Activated CD4-positive, alpha-beta T cell treated with anti-CD3 and anti-CD28 coated beads for 36 hours (primary cell): ENCODE measurements at regions of chr6 and their contacts with region 1.

Region 1: GRCh38 chr6:26322645-26323482 is 42.1 kb upstream of the BTN3A2 start:
- DNase-seq: peak; percentile 77
- ATAC-seq: peak; percentile 66
- H3K4me3 Mint-ChIP-seq: peak overlapping the region; percentile 84
- H3K27ac Mint-ChIP-seq: peak overlapping the region; percentile 93
- H3K4me1 Mint-ChIP-seq: peaks cover 28% of the 10 kb centered on the region
- H3K27me3 Mint-ChIP-seq: peaks cover 5% of the 10 kb centered on the region

Region 2: GRCh38 chr6:26249957-26250697 is 72.7 kb before region 1 on chr6:
- CTCF ChIA-PET with region 1: interaction called, 11 read pairs
- POLR2A ChIA-PET with region 1: interaction called, 12 read pairs
- intact Hi-C with region 1: no loop called
- DNase-seq: peak; percentile 85
- ATAC-seq: peak; percentile 63
- H3K4me3 Mint-ChIP-seq: peak overlapping the region; percentile 86
- H3K27ac Mint-ChIP-seq: peak overlapping the region; percentile 97
- H3K4me1 Mint-ChIP-seq: peaks cover 14% of the 10 kb centered on the region
- H3K27me3 Mint-ChIP-seq: no peaks in the 10 kb centered on the region

Region 3: GRCh38 chr6:26351544-26351953 is 28.7 kb after region 1 on chr6:
- CTCF ChIA-PET with region 1: no interaction called
- POLR2A ChIA-PET with region 1: no interaction called
- intact Hi-C with region 1: no loop called
- DNase-seq: no peak
- ATAC-seq: no peak
- H3K4me3 Mint-ChIP-seq: no peak overlapping the region
- H3K27ac Mint-ChIP-seq: no peak overlapping the region
- H3K4me1 Mint-ChIP-seq: no peaks in the 10 kb centered on the region
- H3K27me3 Mint-ChIP-seq: no peaks in the 10 kb centered on the region

Region 4: GRCh38 chr6:26493258-26493657 is 170.4 kb after region 1 on chr6:
- CTCF ChIA-PET with region 1: no interaction called
- POLR2A ChIA-PET with region 1: no interaction called
- intact Hi-C with region 1: no loop called
- DNase-seq: no peak
- ATAC-seq: peak; percentile 71
- H3K4me3 Mint-ChIP-seq: no peak overlapping the region
- H3K27ac Mint-ChIP-seq: no peak overlapping the region
- H3K4me1 Mint-ChIP-seq: peaks cover 10% of the 10 kb centered on the region
- H3K27me3 Mint-ChIP-seq: no peaks in the 10 kb centered on the region

Region 5: DNA sequence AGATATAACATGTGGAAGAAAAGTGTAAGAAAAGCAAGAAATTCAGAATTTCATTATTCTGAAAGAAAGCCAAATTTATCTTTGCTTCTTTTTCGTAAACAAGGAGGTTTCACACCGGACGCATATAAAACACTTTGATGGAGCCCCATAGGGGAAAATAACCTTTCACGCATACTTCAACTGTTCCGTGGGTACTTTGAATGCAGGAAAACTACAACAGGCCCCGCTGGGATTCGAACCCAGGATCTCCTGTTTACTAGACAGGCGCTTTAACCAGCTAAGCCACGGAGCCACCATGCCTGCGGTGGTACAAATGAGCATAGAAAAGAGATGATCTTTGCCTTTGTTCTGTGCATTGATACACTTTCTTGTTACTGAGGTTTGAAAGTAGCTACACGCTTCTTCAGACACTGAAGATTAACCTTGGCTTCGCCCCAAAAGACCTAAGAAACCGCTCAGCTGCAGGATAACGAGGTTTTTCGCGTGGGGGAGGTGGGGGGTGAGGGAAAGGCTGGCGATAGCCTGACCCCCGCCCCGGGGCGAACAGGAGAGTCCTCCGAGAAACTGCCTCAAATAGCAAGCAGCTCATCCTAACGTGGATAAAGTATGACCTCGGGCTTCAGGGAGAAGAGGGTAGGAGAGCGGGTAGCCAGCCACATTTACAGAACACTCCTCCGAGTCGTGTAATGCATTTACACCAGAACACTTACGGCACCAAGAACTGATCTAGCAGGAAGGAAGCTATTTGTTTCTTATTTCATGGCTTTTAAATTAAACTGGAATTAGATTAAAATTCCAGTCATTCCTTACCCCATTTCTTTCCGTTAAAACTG is 210.1 kb after region 1 on chr6:
- CTCF ChIA-PET with region 1: interaction called, 4 read pairs
- POLR2A ChIA-PET with region 1: interaction called, 3 read pairs
- intact Hi-C with region 1: loop called in 1 of 2 experiments (anchors 1 kb)
- DNase-seq: peak; percentile 94
- ATAC-seq: peak; percentile 40
- H3K4me3 Mint-ChIP-seq: peak overlapping the region; percentile 96
- H3K27ac Mint-ChIP-seq: peak overlapping the region; percentile 95
- H3K4me1 Mint-ChIP-seq: peaks cover 40% of the 10 kb centered on the region
- H3K27me3 Mint-ChIP-seq: no peaks in the 10 kb centered on the region

Region 6: DNA sequence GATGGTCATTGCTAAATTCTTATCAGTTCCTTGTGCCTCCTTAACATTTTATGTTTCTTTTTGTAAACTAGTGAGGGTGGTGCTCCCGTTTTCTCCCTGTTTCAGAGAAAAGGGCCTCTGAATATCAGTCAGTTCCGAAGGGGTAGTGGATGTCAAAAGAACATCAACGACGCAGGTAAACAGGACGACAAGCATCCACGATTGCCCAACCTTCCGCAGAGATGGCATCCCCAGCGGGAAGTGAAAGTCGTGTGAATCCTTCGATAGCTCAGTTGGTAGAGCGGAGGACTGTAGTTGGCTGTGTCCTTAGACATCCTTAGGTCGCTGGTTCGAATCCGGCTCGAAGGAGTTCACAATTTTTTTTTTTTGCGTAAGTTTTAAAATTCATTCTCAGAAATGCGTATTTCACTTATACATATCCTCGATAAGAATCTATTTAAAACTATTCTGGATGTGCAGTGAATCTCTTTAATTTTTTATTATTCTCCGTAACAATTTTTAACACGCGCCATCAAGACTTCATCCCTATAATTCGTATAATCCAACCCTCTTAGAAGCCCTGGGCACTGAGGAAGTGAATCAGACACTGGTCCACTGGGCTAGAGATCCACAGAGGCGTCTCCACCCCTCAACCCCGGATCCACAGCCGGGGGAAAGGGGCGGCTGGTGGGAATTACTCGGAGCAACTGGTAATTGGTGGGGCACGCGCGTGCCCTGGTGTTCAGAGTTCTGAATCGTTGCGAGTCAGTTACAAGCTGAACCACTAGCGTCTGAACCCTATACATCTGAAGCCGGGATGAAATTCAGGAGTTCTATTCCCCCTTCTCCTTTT is 246.0 kb after region 1 on chr6:
- CTCF ChIA-PET with region 1: interaction called, 8 read pairs
- POLR2A ChIA-PET with region 1: interaction called, 4 read pairs
- intact Hi-C with region 1: loop called in 1 of 2 experiments (anchors 2 kb)
- DNase-seq: peak; percentile 97
- ATAC-seq: peak; percentile 74
- H3K4me3 Mint-ChIP-seq: peak overlapping the region; percentile 85
- H3K27ac Mint-ChIP-seq: peak overlapping the region; percentile 81
- H3K4me1 Mint-ChIP-seq: peaks cover 29% of the 10 kb centered on the region
- H3K27me3 Mint-ChIP-seq: peaks cover 2% of the 10 kb centered on the region

Region 7: DNA sequence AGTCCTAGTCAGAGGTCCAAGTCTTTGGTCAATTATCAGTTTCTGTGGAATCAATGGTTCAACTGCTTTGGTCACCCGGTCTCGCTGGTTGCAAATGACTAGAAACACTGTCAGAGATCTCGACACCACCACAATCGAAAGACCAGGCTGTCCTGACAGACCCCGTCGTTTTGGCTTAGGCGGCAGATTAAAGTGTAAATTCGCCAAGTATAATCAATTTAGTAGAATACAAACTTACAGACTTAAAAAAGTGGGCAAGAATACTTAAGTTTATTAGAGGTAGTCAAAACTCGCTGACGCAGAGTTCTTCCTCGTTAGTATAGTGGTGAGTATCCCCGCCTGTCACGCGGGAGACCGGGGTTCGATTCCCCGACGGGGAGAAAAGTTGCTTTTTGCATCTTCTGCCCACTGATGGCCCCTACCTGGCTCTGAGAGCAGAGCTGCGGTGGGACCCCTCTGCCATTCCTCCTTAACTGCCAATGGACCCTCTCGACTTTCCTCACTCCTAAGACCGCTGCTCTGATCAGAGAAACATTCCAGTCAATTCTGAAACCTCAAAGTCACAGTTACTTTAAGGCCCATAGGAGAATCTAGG is 1180.7 kb after region 1 on chr6:
- CTCF ChIA-PET with region 1: no interaction called
- POLR2A ChIA-PET with region 1: no interaction called
- intact Hi-C with region 1: loop called in 1 of 2 experiments (anchors 10 kb)
- DNase-seq: peak; percentile 87
- ATAC-seq: peak; percentile 40
- H3K4me3 Mint-ChIP-seq: peak overlapping the region; percentile 88
- H3K27ac Mint-ChIP-seq: peak overlapping the region; percentile 83
- H3K4me1 Mint-ChIP-seq: peaks cover 26% of the 10 kb centered on the region
- H3K27me3 Mint-ChIP-seq: peaks cover 4% of the 10 kb centered on the region